Spleen (tissue), 13 donors: ENCODE measurements at regions of chr13 and their contacts with region 1.

Region 1: DNA sequence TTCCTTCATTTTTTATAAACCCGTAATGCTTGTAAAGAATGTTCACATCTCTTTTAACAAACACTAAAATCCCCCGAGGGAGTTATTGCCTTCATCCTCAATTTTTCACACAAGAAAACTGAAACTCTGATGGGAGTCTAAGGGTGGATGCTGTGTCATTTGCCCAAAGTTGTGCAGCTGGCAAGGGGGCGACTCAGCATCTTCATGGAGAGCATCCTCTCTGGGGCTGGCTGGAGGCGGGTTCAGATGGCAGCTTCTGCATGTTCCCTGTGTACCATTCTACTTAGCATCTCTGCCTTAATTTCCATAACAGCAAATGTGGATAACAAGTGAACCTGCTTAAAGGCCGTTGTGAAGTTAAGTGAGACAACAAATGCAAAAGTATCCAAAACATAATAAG is 256.4 kb downstream of the IRS2 start:
- DNase-seq: no peak
- H3K4me3 ChIP-seq: no peak overlapping the region
- H3K27ac ChIP-seq: no peak overlapping the region
- H3K4me1 ChIP-seq: no peaks in the 10 kb centered on the region
- H3K27me3 ChIP-seq: peaks cover 0 to 8% (median 0%) of the 10 kb centered on the region in 7 donors
- CTCF ChIP-seq: no peak
- POLR2A ChIP-seq: no peak

Region 2: DNA sequence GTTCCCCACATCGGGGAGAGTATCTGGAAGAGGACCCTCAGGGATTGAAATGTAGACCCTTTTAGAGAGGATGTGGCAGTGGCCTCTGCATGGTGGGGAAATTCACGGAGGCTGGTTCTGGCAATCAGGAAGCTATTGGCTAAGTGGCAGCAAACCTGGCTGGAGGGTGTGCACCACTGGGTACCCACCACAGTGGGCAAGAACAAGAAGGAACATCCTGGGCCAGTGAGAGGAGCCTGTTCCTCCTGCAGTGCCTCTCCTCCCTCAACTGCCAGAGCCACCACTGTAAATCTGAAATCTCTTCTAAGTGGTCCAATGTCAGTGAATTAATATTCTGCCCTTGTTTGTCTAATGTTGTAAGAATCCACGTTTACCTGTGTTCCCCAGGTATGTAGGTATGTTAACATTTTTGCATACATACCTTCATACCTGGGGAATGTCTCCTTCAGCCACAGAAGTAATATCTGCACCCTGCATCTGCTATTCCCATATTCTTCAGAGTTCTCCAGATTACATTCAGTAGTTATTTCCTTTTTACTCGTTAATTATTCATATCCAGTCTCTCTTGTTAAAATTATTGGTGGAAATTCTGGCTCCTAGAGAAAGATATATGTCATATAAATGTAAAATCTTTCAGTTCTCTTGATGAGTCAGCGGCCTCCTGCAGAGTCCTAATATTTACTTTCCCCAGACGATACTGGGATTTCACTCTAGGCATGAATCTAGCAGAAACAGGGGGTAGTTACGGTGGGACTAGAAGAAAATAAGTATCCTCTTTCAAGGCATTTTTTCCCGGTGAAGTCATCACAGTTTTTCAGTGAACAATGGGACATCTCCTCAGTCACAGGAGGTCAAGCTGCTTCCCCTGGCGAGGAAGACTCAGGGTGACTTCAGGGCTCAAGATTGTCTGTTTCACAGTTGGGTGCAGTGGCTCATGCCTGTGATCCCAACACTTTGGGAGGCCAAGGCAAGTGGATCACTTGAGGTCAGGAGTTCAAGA is 752.2 kb before region 1 on chr13:
- intact Hi-C with region 1: no loop called
- DNase-seq: no peak
- H3K4me3 ChIP-seq: no peak overlapping the region
- H3K27ac ChIP-seq: no peak overlapping the region
- H3K4me1 ChIP-seq: no peaks in the 10 kb centered on the region
- H3K27me3 ChIP-seq: no peaks in the 10 kb centered on the region
- CTCF ChIP-seq: no peak
- POLR2A ChIP-seq: no peak

Region 3: DNA sequence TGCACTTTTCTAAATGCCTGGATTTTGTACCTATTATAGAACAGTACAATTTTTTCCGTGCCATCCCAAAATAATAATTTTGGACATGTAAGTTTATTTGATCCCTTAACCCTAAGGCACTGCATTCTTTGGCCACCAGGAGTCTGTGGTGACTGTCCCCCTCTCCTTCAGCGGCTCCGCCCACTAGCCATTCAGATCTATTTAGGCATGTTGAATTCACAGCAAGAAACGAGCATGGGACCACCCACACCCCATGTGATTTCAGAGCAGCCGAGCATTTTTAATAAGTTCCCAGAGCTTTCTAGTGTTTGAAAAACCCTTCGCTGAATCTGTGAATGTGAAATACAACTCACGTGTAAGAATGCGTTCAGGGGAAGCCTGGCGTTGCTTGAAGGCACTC is 333.0 kb before region 1 on chr13:
- intact Hi-C with region 1: loop called (anchors 5 kb)
- DNase-seq: no peak
- H3K4me3 ChIP-seq: no peak overlapping the region
- H3K27ac ChIP-seq: no peak overlapping the region
- H3K4me1 ChIP-seq: no peaks in the 10 kb centered on the region
- H3K27me3 ChIP-seq: no peaks in the 10 kb centered on the region
- CTCF ChIP-seq: no peak
- POLR2A ChIP-seq: no peak

Region 4: DNA sequence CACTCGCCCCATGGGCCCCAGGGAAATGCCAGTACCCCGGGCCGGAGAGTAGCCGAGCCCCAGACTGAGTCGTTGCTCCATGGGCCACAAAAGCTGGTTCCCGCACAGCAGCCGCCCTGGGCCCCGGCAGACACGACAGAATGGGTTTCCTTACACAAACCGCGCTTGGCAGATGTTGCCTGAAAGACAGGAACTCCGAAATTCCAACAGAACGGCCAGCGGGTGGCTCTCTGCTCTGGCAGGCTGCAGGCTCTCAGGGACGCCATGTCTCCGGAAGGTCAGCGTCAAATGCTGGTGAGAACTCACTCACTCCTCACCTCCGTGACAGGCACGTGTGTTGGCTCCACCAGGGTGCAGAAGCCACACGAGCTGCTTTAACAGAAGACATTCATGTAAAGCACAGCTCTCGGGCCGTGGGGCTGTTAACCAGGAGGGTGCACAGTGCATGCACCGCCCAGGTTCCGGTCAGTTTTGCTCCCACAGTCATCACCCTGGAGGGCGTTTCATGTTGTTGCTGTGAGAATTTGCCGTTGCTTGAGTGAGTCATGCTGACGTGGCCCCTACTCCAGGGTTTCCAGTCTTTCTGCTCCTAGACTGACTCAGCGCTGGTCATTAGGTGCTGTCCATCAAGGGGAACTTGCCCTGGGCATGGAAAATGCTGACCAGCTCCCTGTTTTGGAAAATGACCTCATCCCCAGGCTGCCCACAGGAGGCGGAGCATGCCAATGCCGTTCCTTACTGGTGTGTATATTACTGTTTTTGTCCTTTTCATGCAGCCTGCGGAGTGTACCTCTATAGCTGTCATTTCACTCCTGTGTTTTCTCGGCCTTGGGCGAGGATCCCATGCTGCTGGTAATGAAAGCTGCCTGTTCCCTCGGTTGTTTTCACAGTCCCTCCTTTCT is 1340.1 kb after region 1 on chr13:
- intact Hi-C with region 1: no loop called
- DNase-seq: peak; percentile 78
- H3K4me3 ChIP-seq: peak overlapping the region in 7 of 8 donors; percentile 10 to 44 (median 23)
- H3K27ac ChIP-seq: peak overlapping the region; percentile 57 to 86 (median 76)
- H3K4me1 ChIP-seq: peaks cover 4 to 43% (median 21%) of the 10 kb centered on the region in 6 donors
- H3K27me3 ChIP-seq: peaks cover 0 to 74% (median 0%) of the 10 kb centered on the region in 7 donors
- CTCF ChIP-seq: peak in 3 of 11 experiments; percentile 14 to 20 (median 18)
- POLR2A ChIP-seq: no peak